ENCODE measurements at regions of chr16 and their contacts with region 1.

Region 1: DNA sequence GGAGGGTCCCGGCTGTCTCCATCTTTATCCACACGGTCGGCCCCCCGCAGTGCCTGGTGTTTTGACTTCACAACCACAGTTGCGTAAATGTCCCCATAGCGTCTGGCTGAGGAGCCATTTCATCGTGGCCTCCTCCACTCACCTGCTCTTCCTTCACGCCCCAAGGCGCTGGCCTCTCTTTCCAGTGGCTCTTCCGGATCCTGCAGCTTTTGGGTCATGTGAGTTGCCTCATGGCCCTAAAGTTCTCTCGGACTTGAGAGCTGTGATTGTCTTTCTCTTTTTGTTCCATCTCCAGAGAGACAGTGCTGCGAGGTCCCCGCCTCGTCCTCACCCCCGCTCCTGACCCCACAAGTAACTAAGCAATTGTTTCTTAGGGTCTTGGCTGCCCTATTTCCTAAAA is 22.7 kb downstream of the FLYWCH1 start:
- DNase-seq: no peak
- H3K4me3 ChIP-seq: no peak overlapping the region
- H3K4me3 Mint-ChIP-seq: no peak overlapping the region
- H3K27ac Mint-ChIP-seq: no peak overlapping the region
- H3K4me1 ChIP-seq: no peaks in the 10 kb centered on the region
- H3K4me1 Mint-ChIP-seq: no peaks in the 10 kb centered on the region
- H3K27me3 ChIP-seq: no peaks in the 10 kb centered on the region
- H3K27me3 Mint-ChIP-seq: no peaks in the 10 kb centered on the region
- CTCF ChIP-seq: no peak

Region 2: DNA sequence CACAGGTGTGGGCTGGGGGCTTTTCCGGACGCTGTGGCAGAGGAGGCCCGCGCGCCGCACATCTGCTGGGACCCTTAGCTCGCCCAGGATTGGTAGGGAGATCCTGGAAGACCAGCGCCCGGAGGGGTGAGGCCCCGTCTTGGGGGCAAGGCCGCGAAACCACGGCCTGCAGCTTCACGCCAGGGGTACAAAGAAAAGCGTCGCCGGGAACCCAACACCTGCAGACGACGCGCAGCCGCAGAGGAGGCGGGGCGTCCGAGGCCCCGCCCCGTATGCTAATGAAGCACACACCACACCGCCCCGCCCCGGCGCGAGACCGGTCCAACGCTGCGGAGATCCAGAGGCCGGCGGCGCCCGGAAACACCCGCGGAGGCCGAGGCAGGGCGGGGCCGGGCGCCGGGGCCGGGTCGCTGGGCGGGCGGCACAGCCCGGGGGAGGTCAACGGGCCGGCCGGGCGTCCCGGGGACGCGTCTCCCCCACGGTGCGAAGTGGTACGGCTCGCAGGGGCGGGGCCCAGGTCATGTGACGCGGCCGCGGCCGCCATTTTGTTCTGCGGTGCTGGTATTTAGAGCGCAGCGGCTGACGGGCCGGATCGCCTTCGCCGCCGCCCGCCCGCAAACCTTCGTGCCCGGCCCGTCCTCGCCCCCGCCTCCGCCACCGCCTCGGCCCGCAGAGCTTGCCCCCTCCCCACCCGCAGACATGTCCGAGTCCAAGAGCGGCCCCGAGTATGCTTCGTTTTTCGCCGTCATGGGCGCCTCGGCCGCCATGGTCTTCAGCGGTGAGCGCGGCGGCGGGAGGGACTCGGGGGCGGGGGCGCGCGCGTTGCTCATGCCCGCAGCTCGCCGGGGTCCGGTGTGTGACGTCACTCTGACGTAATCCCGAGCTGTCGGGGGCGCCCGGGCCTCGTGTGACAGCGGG is 420.8 kb before region 1 on chr16 and contains the start of gene ATP6V0C:
- CTCF ChIA-PET with region 1: no interaction called
- POLR2A ChIA-PET with region 1: no interaction called
- intact Hi-C with region 1: no loop called
- DNase-seq: peak; percentile 94 to 95
- H3K4me3 ChIP-seq: peak within 1 kb of the TSS; percentile 99
- H3K4me3 Mint-ChIP-seq: peak within 1 kb of the TSS; percentile 86
- H3K27ac Mint-ChIP-seq: peak within 1 kb of the TSS; percentile 87
- H3K4me1 ChIP-seq: peaks cover 17% of the 10 kb centered on the region
- H3K4me1 Mint-ChIP-seq: peaks cover 27% of the 10 kb centered on the region
- H3K27me3 ChIP-seq: no peaks in the 10 kb centered on the region
- H3K27me3 Mint-ChIP-seq: no peaks in the 10 kb centered on the region
- CTCF ChIP-seq: no peak
- total RNA-seq, gene ATP6V0C: 200 and 204 TPM in 2 replicates

Region 3: GRCh38 chr16:2948807-2949738 is 14.6 kb after region 1 on chr16:
- CTCF ChIA-PET with region 1: no interaction called
- POLR2A ChIA-PET with region 1: interaction called, 12 read pairs
- intact Hi-C with region 1: no loop called
- DNase-seq: no peak
- H3K4me3 ChIP-seq: no peak overlapping the region
- H3K4me3 Mint-ChIP-seq: no peak overlapping the region
- H3K27ac Mint-ChIP-seq: no peak overlapping the region
- H3K4me1 ChIP-seq: no peaks in the 10 kb centered on the region
- H3K4me1 Mint-ChIP-seq: no peaks in the 10 kb centered on the region
- H3K27me3 ChIP-seq: no peaks in the 10 kb centered on the region
- H3K27me3 Mint-ChIP-seq: no peaks in the 10 kb centered on the region
- CTCF ChIP-seq: no peak